RWPE1 (cell line): ENCODE measurements at regions of chr1 and their contacts with region 1.

Region 1: DNA sequence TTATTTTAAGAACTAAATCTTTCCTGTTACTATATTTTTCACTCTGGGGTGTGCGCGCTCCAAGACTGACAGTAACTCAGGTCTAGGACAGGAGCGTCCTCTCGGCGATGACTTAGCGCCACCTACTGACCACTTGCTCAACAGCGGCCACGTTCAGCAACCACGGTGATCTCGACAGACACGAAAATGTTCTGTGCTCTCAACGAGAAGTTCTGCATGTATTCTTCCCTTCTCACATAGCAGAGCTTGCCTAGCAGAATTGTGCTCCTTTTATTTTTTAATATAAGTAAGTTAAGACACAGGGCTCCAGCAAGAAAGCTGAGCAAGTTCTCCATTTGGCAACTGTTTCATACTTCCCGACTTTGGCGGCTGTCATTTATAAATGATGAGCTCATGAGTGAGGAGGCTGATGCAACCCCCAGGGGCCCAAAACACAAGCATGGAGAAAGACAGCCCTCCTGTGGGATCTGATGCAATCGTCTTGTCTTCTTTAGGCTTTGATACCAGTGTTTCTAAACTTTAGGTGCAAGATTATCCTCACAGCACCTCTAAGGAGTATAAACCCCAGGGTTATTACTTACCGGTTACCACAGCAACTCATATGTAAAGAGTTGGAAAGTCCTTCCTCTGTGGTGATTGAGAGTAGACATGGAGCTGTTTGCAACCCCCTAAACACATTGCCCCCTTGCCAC is 92.6 kb downstream of the HHIPL2 start:
- DNase-seq: peak; percentile 81
- H3K27ac ChIP-seq: peak overlapping the region; percentile 48
- CTCF ChIP-seq: peak; percentile 92

Region 2: GRCh38 chr1:221478050-221478949 is 977.0 kb before region 1 on chr1:
- CTCF ChIA-PET with region 1: interaction called, 20 read pairs
- POLR2A ChIA-PET with region 1: no interaction called
- DNase-seq: peak; percentile 89
- H3K27ac ChIP-seq: no peak overlapping the region
- CTCF ChIP-seq: peak; percentile 80

Region 3: DNA sequence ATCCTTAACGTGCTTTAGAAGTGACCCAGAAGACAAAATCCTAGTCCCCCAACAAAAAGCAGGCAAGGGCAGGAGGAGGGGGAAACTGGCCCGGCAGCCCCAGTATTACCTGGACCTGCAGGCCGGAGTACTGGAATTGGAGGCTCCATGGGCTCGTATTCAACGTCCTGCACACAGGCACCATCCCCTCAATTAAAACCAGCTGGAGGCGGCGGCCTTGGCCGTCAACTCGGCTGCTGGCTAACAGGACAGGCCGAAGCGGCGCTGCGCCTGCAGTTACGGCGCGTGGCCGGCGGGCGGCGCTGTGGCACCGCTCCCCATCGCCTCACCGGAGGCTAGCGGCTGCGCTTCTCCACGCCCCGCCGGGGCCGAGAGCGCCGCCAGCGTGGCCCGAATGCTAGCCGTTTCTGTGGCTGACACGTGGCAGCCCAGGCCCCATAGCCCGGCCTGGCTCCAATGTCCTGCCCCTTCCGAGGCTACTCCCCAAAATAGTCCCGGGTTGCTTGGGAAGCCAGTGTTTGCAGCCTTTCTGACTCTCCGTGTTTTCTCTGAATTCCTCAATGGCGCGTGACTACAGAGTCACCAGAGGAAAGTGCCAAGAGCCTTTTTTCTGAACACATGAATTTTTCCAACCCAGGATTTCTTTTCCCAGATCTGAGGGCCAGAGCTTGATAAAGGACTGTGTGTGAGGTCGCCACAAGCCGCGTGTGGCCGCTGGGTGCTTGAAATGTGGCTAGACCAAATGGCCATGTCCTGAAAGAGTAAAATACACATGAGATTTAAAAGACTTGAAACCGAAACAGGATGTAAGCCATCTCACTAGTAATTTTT is 10.1 kb after region 1 on chr1:
- CTCF ChIA-PET with region 1: interaction called, 11 read pairs
- POLR2A ChIA-PET with region 1: no interaction called
- DNase-seq: peak; percentile 86
- H3K27ac ChIP-seq: peak overlapping the region; percentile 78
- CTCF ChIP-seq: peak; percentile 99

Region 4: DNA sequence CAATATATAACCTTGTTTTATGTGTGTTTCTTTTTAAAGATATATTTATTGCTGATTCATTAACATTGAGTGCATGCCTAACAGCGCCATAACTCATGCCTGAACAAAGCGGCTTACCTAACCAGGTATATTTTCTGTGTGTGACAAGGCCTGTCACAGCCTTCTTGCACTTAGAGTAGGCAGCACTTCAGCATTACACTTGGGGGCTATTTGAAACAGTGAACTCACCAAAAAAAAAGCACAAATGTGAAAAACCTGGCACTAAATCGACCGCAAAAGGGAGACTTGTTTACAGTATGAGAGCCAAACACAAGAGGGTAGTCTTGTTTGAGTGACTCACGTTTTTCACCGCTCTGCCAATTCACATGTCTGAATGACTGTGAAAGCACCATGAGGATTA is 471.2 kb after region 1 on chr1:
- CTCF ChIA-PET with region 1: no interaction called
- POLR2A ChIA-PET with region 1: no interaction called
- DNase-seq: no peak
- H3K27ac ChIP-seq: no peak overlapping the region
- CTCF ChIP-seq: no peak